Activated CD4-positive, alpha-beta memory T cell treated with anti-CD3 and anti-CD28 coated beads, Interleukin-2, amount 10 ng/mL, durations not matched to agents 7 days and 5 days (primary cell): ENCODE measurements at regions of chr1 and their contacts with region 1.

Region 1: DNA sequence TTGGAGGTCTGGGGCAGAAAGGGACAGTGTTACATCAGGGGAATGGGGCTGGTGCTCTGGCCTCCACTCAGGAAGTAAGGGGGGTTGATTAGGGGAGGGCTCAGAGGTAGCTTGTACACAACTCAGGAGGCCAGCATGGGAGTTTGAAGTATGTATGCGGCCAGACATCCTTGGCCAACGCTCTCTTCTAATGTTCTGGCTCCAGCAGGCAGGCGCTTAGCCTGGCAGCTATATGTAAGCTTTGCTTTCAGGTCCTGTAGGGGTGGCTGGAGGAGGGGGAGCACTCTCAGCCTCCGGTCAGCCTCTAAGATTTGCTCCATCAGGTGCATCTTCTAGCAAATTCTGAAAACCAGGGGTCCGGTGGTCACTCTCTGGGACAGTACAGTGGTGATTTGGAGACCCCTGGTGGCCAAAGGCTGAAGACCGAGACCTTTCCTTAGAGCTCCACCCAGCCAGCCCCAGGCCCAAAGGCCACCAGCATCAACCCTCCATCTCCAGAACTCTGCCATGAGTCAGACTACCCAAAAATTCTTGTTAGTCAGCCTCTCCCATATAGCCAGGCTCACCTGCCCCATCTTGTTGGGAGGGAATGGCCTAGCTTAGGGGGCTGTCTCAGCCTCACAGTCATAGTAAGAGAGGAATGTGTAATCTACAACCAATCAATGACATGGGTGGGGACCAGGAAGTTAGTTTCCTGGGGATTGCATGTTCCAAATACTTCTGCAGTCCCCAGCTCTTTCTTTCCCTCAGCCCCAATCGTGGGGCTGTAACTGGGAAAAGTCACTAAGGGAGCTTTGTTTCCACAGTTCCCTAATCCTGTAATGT is 9.7 kb upstream of the COL8A2 start:
- DNase-seq: peak; percentile 41
- H3K4me3 Mint-ChIP-seq: no peak overlapping the region
- H3K27ac Mint-ChIP-seq: no peak overlapping the region
- H3K4me1 Mint-ChIP-seq: peaks cover 8% of the 10 kb centered on the region
- H3K27me3 Mint-ChIP-seq: no peaks in the 10 kb centered on the region

Region 2: GRCh38 chr1:36099681-36100341 is 34.9 kb before region 1 on chr1:
- CTCF ChIA-PET with region 1: interaction called, 51 read pairs
- POLR2A ChIA-PET with region 1: interaction called, 5 read pairs
- DNase-seq: peak; percentile 78
- H3K4me3 Mint-ChIP-seq: no peak overlapping the region
- H3K27ac Mint-ChIP-seq: no peak overlapping the region
- H3K4me1 Mint-ChIP-seq: peaks cover 7% of the 10 kb centered on the region
- H3K27me3 Mint-ChIP-seq: no peaks in the 10 kb centered on the region

Region 3: GRCh38 chr1:36115200-36115669 is 19.5 kb before region 1 on chr1:
- CTCF ChIA-PET with region 1: interaction called, 18 read pairs
- POLR2A ChIA-PET with region 1: interaction called, 6 read pairs
- DNase-seq: no peak
- H3K4me3 Mint-ChIP-seq: no peak overlapping the region
- H3K27ac Mint-ChIP-seq: no peak overlapping the region
- H3K4me1 Mint-ChIP-seq: peaks cover 16% of the 10 kb centered on the region
- H3K27me3 Mint-ChIP-seq: no peaks in the 10 kb centered on the region